Calu3 (cell line): ENCODE measurements at regions of chr5 and their contacts with region 1.

Region 1: GRCh38 chr5:57779383-57780223 is 297.0 kb upstream of the ACTBL2 start:
- DNase-seq: peak; percentile 60
- H3K4me3 Mint-ChIP-seq: no peak overlapping the region
- H3K27ac Mint-ChIP-seq: peak overlapping the region; percentile 22
- H3K4me1 Mint-ChIP-seq: peaks cover 59% of the 10 kb centered on the region
- H3K27me3 Mint-ChIP-seq: no peaks in the 10 kb centered on the region
- CTCF ChIP-seq: peak; percentile 44

Region 2: GRCh38 chr5:57650360-57651069 is 129.1 kb before region 1 on chr5:
- CTCF ChIA-PET with region 1: interaction called, 31 read pairs
- intact Hi-C with region 1: loop called (anchors 5 kb)
- DNase-seq: peak; percentile 50
- H3K4me3 Mint-ChIP-seq: no peak overlapping the region
- H3K27ac Mint-ChIP-seq: peak overlapping the region; percentile 19
- H3K4me1 Mint-ChIP-seq: peaks cover 18% of the 10 kb centered on the region
- H3K27me3 Mint-ChIP-seq: no peaks in the 10 kb centered on the region
- CTCF ChIP-seq: peak; percentile 67

Region 3: GRCh38 chr5:57692582-57693487 is 86.8 kb before region 1 on chr5:
- CTCF ChIA-PET with region 1: no interaction called
- intact Hi-C with region 1: loop called (anchors 2 kb)
- DNase-seq: peak; percentile 86
- H3K4me3 Mint-ChIP-seq: peak overlapping the region; percentile 71
- H3K27ac Mint-ChIP-seq: peak overlapping the region; percentile 98
- H3K4me1 Mint-ChIP-seq: peaks cover 51% of the 10 kb centered on the region
- H3K27me3 Mint-ChIP-seq: no peaks in the 10 kb centered on the region
- CTCF ChIP-seq: no peak

Region 4: GRCh38 chr5:57887851-57888621 is 108.4 kb after region 1 on chr5:
- CTCF ChIA-PET with region 1: interaction called, 32 read pairs
- intact Hi-C with region 1: loop called (anchors 1 kb)
- DNase-seq: peak; percentile 53
- H3K4me3 Mint-ChIP-seq: no peak overlapping the region
- H3K27ac Mint-ChIP-seq: no peak overlapping the region
- H3K4me1 Mint-ChIP-seq: peaks cover 17% of the 10 kb centered on the region
- H3K27me3 Mint-ChIP-seq: no peaks in the 10 kb centered on the region
- CTCF ChIP-seq: no peak